K562 (cell line): ENCODE measurements at regions of chr3 and their contacts with region 1.

Region 1: GRCh38 chr3:52144034-52144795 is 10.0 kb downstream of the POC1A start:
- DNase-seq: peak; percentile 80 to 86 (median 84)
- ATAC-seq: peak; percentile 98
- H3K4me3 ChIP-seq: no peak overlapping the region
- H3K27ac ChIP-seq: no peak overlapping the region
- H3K4me1 ChIP-seq: no peaks in the 10 kb centered on the region
- H3K27me3 ChIP-seq: no peaks in the 10 kb centered on the region
- CTCF ChIP-seq: peak; percentile 83 to 85 (median 84)
- EP300 ChIP-seq: no peak
- POLR2A ChIP-seq: no peak
- RAD21 ChIP-seq: peak; percentile 89 to 92

Region 2: GRCh38 chr3:50850639-50851511 is 1293.3 kb before region 1 on chr3:
- CTCF ChIA-PET with region 1: no interaction called
- POLR2A ChIA-PET with region 1: no interaction called
- in situ Hi-C with region 1: no loop called
- intact Hi-C with region 1: no loop called
- DNase-seq: no peak
- ATAC-seq: no peak
- H3K4me3 ChIP-seq: no peak overlapping the region
- H3K27ac ChIP-seq: no peak overlapping the region
- H3K4me1 ChIP-seq: no peaks in the 10 kb centered on the region
- H3K27me3 ChIP-seq: no peaks in the 10 kb centered on the region
- CTCF ChIP-seq: no peak
- EP300 ChIP-seq: no peak
- POLR2A ChIP-seq: no peak
- RAD21 ChIP-seq: no peak

Region 3: DNA sequence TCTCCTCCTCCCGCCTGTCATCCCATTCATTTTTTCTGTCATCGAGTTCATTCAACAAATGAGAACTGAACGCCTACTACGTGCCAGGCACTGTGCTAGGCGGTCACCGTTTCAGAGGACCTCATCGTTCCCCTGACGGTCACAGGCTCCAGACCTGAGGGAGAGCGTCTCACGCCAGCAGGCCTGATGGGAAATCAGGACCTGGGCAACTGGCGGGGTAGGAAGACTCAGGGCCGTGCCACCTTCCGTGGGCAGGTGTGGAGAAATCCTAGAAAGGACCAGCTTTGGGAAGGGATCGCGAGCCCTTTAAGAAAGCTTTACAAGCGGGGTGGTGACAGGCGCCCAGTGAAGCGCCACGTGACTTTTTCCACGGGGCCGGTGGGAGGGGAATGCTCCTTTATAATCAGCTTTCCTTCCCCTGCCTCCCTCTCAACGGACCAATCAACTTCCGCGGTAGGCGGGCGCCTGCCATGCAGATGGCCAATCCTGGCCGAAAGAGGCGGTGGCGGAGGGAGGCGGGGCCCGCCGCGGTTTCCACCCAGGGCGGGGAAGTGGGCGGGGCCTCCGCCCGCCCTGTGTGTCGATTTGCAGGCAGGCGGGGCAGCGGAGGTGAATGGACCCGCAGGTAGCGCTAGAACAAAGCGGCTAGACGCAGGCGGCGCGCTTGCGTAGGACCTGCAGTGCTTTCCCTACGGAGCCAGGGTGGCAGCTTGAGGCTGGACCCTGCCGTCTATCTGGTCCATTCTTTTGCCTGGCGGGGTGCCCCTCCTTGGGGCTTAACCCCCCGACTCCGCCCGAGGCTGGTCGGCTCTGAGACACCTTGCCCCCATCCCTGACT is 87.0 kb before region 1 on chr3:
- CTCF ChIA-PET with region 1: interaction called, 3 read pairs
- POLR2A ChIA-PET with region 1: no interaction called
- in situ Hi-C with region 1: no loop called
- intact Hi-C with region 1: loop called (anchors 1 kb)
- DNase-seq: peak; percentile 93 to 98 (median 96)
- ATAC-seq: peak; percentile 91
- H3K4me3 ChIP-seq: peak overlapping the region; percentile 61
- H3K27ac ChIP-seq: peak overlapping the region; percentile 68
- H3K4me1 ChIP-seq: peaks cover 17 to 52% of the 10 kb centered on the region in 2 experiments; a peak in 4 of 5 replicates
- H3K27me3 ChIP-seq: no peaks in the 10 kb centered on the region
- CTCF ChIP-seq: 0 out of 6 replicates have a peak, but pooled peaks of 1 of the 3 experiments have one; percentile 11
- EP300 ChIP-seq: no peak
- POLR2A ChIP-seq: 0 out of 2 replicates have a peak, but pooled peaks have one; percentile 40
- RAD21 ChIP-seq: no peak; a peak in 1 of 4 replicates